ENCODE measurements at regions of chr3 and their contacts with region 1.

Region 1: DNA sequence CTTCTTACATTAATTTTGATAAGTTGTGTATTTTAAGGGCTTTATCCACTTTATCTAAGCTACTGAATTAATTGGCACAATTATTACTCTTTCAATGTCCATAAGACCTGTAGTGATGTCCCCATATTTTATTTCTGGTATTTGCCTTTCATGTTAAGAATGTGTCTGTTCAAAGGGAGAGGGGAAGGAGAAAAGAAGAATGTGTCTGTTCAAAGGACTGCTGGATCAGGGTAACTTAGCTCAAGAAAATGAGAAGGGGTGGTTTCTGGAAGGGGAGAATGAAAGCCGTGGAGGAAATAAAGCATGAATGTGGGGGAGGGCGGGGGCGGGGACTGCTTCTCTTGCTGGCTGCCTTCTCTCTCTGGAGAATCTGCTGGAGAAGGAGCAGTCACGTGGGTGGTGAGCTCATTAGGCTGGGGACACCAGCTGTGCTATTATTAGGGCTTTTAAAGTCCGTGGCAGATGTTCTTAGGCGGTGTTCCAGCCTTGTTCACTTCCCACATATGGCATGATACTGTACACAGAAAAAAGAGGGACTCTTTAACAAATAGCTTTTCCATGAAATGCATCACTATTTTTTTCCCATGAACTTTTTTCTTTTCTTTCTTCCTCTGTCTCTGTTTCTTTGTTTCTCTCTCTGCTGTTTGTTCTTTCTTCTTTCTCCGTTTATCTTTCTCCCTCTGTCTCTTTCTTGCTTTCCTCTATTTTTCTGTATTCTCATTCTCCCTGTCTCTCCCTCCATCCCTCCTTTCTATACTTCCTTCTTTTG is 63.7 kb upstream of the ULK4 start:
- DNase-seq: peak; percentile 98
- H3K4me3 ChIP-seq: peak overlapping the region in 3 of 4 donors; percentile 15 to 19 (median 16)
- H3K27ac ChIP-seq: peak overlapping the region; percentile 78 to 89 (median 88)
- H3K4me1 ChIP-seq: peaks cover 71 to 79% (median 75%) of the 10 kb centered on the region in 4 donors
- H3K27me3 ChIP-seq: no peaks in the 10 kb centered on the region
- CTCF ChIP-seq: no peak
- EP300 ChIP-seq: no peak
- POLR2A ChIP-seq: no peak

Region 2: DNA sequence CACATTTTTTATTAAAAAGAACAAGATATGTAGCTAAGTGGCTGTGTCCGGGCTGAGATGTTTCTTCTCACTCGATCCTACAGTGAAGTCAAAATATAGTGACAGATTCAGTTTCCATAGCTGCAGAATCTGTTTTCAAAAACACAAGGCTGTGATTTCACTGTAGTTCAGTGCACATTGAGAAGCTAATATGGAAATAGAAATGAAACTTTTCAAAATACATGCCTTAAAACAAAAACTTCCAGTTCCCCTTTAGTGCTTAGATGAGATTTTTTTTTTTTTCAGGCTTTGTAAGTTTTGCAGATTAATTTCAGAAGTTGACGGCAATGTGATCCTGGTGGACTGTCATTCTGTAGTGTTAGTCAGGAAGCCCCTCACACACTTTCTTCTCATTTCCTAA is 41.8 kb after region 1 on chr3:
- intact Hi-C with region 1: loop called (anchors 5 kb)
- DNase-seq: no peak
- H3K4me3 ChIP-seq: peak overlapping the region in 3 of 4 donors; percentile 21 to 33 (median 23)
- H3K27ac ChIP-seq: peak overlapping the region; percentile 80 to 88 (median 84)
- H3K4me1 ChIP-seq: peaks cover 84 to 98% (median 96%) of the 10 kb centered on the region in 4 donors
- H3K27me3 ChIP-seq: no peaks in the 10 kb centered on the region
- CTCF ChIP-seq: no peak
- EP300 ChIP-seq: no peak
- POLR2A ChIP-seq: no peak

Measured in esophagus muscularis mucosa (tissue), 4 donors.